ENCODE measurements at regions of chr11 and their contacts with region 1.

Region 1: DNA sequence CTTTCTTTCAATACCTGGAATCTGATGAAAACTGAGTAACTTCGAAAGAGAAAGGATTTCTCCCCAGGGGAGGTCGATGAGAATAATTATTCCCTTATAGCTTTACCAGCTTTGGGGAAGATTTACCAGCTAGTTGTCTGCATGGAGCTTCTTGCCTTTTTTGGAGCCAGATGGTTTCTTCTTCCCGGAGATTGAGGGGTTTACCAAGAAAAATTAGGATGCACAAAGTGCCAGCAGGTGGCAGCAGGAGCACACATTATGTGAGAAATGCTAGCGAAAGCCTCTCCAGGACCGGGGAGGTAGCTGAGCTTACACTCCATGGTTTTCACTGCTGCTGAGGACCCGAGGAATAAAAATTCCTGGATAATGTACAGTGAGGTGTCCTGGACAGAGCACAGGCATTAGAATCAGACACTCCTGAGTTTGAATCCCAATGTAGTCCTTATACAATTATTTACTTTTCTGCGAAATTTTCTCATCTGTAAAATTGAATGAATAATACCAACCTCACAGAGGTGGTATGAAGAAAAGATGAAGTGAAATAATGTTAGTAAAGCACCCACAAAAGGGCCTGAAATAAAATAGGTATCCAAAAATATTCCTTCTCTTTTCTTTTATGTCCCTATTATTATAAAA is 46.0 kb upstream of the PARVA start:
- DNase-seq: peak; percentile 78
- ATAC-seq: peak; percentile 87
- H3K4me3 ChIP-seq: no peak overlapping the region
- H3K27ac ChIP-seq: no peak overlapping the region
- H3K4me1 ChIP-seq: no peaks in the 10 kb centered on the region
- H3K27me3 ChIP-seq: peaks cover 0 to 2% of the 10 kb centered on the region in 2 experiments; a peak in 1 of 5 replicates
- CTCF ChIP-seq: peak; percentile 89
- EP300 ChIP-seq: no peak
- POLR2A ChIP-seq: no peak
- RAD21 ChIP-seq: peak; percentile 83

Region 2: GRCh38 chr11:12377824-12378593 is 46.7 kb after region 1 on chr11:
- CTCF ChIA-PET with region 1: no interaction called
- POLR2A ChIA-PET with region 1: interaction called, 3 read pairs
- in situ Hi-C with region 1: no loop called
- intact Hi-C with region 1: loop called (anchors 5 kb)
- DNase-seq: peak; percentile 62
- ATAC-seq: peak; percentile 91
- H3K4me3 ChIP-seq: peak overlapping the region; percentile 80 to 91 (median 86)
- H3K27ac ChIP-seq: peak overlapping the region; percentile 63
- H3K4me1 ChIP-seq: peaks cover 27% of the 10 kb centered on the region
- H3K27me3 ChIP-seq: peaks cover 0 to 4% of the 10 kb centered on the region in 2 experiments; a peak in 1 of 5 replicates
- CTCF ChIP-seq: peak; percentile 32
- EP300 ChIP-seq: no peak
- POLR2A ChIP-seq: peak; percentile 30 to 35; a peak in 1 of 4 replicates
- RAD21 ChIP-seq: peak; percentile 59; the same call in 1 of the 2 replicates

Region 3: GRCh38 chr11:12411806-12412727 is 80.7 kb after region 1 on chr11:
- CTCF ChIA-PET with region 1: interaction called, 5 read pairs
- POLR2A ChIA-PET with region 1: no interaction called
- in situ Hi-C with region 1: no loop called
- intact Hi-C with region 1: loop called (anchors 1 kb)
- DNase-seq: peak; percentile 31
- ATAC-seq: peak; percentile 97
- H3K4me3 ChIP-seq: no peak overlapping the region
- H3K27ac ChIP-seq: no peak overlapping the region
- H3K4me1 ChIP-seq: no peaks in the 10 kb centered on the region; the same call in 1 of the 2 replicates
- H3K27me3 ChIP-seq: no peaks in the 10 kb centered on the region
- CTCF ChIP-seq: peak; percentile 82
- EP300 ChIP-seq: no peak
- POLR2A ChIP-seq: no peak
- RAD21 ChIP-seq: peak; percentile 72

Region 4: DNA sequence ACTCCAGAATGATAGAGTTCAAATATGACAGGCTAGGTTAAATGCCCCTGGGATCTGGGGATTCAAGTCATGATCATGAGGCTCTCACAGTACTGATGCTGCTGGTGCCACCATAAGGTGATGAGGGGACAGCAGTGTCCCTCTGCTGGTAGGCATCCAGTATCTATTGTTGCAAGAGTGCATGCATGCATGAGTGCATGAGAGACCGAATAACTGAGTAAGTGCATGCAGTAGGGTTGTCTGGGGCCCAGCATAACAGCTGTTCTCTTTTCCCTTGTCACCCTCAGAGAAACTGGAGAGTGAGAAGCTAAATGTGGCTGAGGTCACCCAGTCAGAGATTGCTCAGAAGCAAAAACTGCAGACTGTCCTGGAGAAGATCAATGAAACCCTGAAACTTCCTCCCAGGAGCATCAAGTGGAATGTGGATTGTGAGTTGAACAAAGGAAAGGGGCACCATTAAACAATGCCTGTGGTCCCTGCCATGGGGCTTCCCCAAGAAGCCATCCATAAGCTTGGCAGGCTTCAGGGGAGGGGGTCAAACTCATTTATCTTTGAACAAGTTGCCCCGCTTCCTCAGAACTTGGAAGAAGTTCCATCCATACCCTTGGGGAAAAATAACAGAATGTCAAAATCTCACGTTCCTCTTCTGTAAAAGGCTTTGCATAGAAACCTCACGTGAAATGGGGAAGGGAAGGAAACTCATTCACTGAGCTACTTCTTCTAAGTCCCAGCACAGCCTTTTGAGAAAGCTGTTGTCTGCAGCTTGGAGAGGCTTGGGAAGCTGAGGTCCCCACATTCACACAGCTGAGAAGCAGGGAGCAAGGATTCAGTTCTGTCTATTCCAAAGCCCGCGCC is 165.0 kb after region 1 on chr11:
- CTCF ChIA-PET with region 1: no interaction called
- POLR2A ChIA-PET with region 1: no interaction called
- in situ Hi-C with region 1: loop called (anchors 25 kb)
- intact Hi-C with region 1: loop called (anchors 5 kb)
- DNase-seq: peak; percentile 20
- ATAC-seq: peak; percentile 83
- H3K4me3 ChIP-seq: no peak overlapping the region
- H3K27ac ChIP-seq: no peak overlapping the region
- H3K4me1 ChIP-seq: no peaks in the 10 kb centered on the region
- H3K27me3 ChIP-seq: no peaks in the 10 kb centered on the region
- CTCF ChIP-seq: peak; percentile 22; the same call in 1 of the 2 replicates
- EP300 ChIP-seq: no peak; a peak in 1 of 4 replicates
- POLR2A ChIP-seq: no peak
- RAD21 ChIP-seq: no peak

Region 5: DNA sequence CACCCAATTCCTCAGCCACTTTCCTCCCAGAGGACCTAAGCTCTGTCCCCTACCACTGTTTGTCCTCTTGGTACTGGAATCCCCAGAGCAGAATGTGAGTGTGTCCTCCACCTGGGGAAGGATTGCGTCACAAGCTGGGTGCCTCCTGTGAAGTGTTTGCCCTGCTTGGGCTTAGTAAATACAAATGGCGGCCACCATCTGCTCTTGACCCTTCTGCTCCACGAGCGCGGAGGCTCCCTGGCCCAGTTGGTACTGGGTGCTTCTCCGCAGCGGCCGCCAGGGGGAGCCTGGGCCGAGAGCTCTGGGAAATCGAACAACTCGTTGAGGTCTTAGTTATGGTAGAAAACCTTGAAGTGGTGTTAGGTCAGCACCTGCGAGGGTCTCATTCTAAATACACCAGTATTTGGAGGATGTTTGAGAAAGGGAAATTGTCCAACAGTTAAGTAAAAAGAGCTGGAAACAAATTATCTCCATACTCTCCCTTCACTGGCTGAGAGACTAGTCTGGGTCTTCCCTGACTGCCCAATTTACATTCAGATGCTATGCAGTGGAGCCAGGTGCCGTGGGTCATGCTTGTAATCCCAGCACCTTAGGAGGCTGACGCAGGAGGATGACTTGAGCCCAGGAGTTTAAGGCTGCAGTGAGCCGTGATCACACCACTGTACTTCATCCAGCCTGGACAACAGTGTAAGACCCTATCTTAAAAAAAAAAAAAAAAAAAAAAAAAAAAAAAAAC is 268.2 kb after region 1 on chr11:
- CTCF ChIA-PET with region 1: no interaction called
- POLR2A ChIA-PET with region 1: no interaction called
- in situ Hi-C with region 1: loop called (anchors 25 kb)
- intact Hi-C with region 1: loop called (anchors 2 kb)
- DNase-seq: peak; percentile 91
- ATAC-seq: peak; percentile 99
- H3K4me3 ChIP-seq: no peak overlapping the region
- H3K27ac ChIP-seq: no peak overlapping the region
- H3K4me1 ChIP-seq: peaks cover 26% of the 10 kb centered on the region
- H3K27me3 ChIP-seq: no peaks in the 10 kb centered on the region
- CTCF ChIP-seq: peak; percentile 96
- EP300 ChIP-seq: peak in 1 of 2 experiments; percentile 55; a peak in 2 of 4 replicates
- POLR2A ChIP-seq: no peak
- RAD21 ChIP-seq: peak; percentile 89

Region 6: GRCh38 chr11:12888525-12889158 is 557.3 kb after region 1 on chr11:
- CTCF ChIA-PET with region 1: interaction called, 19 read pairs
- POLR2A ChIA-PET with region 1: no interaction called
- in situ Hi-C with region 1: loop called (anchors 5 kb)
- intact Hi-C with region 1: no loop called
- DNase-seq: peak; percentile 71
- ATAC-seq: peak; percentile 90
- H3K4me3 ChIP-seq: no peak overlapping the region
- H3K27ac ChIP-seq: no peak overlapping the region
- H3K4me1 ChIP-seq: no peaks in the 10 kb centered on the region
- H3K27me3 ChIP-seq: no peaks in the 10 kb centered on the region
- CTCF ChIP-seq: peak; percentile 88
- EP300 ChIP-seq: no peak
- POLR2A ChIP-seq: no peak
- RAD21 ChIP-seq: peak; percentile 89

Region 7: DNA sequence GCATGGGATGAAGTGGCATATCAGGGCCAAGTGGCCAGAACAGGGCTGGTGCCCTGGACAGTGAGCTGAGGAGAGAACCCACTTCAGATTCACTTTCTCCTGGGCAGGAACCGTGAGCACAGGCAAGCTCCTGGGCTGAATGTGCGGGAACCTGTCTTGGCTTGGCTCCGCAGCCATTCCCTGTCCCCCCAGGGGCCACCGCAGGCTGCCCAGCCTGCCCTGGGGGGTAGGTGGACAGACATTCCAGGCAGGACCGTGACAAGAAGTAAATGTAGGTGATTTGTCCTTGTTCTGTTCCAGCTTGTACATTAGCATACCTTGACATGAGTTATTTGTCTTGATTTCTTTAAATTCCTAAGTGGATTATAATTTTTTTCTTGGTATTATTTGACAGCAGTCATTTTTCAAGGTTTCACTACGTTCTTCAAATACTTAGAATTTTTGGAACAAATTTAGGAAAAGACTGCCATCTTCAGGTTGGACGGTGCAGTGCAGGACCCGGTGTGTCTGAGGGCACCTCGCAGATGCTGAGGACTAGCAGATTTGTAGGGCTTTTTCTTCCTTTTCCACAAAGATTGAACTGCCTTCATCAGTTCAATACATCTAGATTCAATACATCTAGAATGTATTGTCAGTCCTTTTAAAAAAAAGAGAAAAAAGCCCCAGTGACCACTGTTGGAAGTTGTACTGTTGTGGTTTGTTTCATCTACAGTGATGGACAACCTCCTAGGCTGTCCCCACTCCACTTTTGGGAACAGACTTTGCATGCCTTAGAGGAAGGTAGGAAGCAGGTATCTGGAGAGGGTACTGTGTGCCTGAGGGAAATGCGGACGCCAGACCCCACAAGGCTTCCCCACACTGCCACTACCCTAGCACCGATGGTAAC is 562.7 kb after region 1 on chr11:
- CTCF ChIA-PET with region 1: interaction called, 19 read pairs
- POLR2A ChIA-PET with region 1: no interaction called
- in situ Hi-C with region 1: loop called (anchors 5 kb)
- intact Hi-C with region 1: loop called (anchors 1 kb)
- DNase-seq: peak; percentile 39
- ATAC-seq: peak; percentile 82
- H3K4me3 ChIP-seq: no peak overlapping the region
- H3K27ac ChIP-seq: no peak overlapping the region
- H3K4me1 ChIP-seq: no peaks in the 10 kb centered on the region
- H3K27me3 ChIP-seq: no peaks in the 10 kb centered on the region
- CTCF ChIP-seq: peak; percentile 68
- EP300 ChIP-seq: no peak
- POLR2A ChIP-seq: no peak
- RAD21 ChIP-seq: peak; percentile 64; the same call in 1 of the 2 replicates